GM10248 (cell line): ENCODE measurements at regions of chr5 and their contacts with region 1.

Region 1: DNA sequence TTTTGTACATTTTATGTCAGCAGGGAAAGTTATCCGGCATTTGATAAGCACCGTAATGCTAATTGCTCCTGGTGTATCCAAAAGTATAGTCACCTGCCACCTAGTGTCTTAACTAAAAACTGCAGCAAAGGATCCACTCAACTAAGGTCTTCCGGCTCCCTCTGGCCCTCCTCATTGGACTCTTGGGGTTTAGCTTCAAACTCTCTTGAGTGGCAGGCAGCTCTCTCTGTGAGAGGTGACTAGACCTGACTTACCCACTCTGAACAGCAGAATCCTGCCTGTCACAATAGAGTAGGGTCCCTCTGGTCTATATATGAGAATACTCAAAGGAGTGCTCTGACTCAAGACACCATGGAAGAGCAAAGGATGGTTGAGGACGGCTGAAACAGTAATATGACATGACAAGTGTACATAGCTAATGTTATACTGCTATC is 60.3 kb upstream of the CAST start:
- DNase-seq: peak; percentile 66
- CTCF ChIP-seq: peak; percentile 73

Region 2: GRCh38 chr5:95858661-95859326 is 743.0 kb before region 1 on chr5:
- CTCF ChIA-PET with region 1: interaction called, 14 read pairs
- POLR2A ChIA-PET with region 1: no interaction called
- DNase-seq: peak; percentile 89
- CTCF ChIP-seq: peak; percentile 98

Region 3: GRCh38 chr5:96350678-96351077 is 251.2 kb before region 1 on chr5:
- CTCF ChIA-PET with region 1: interaction called, 283 read pairs
- POLR2A ChIA-PET with region 1: no interaction called
- DNase-seq: no peak
- CTCF ChIP-seq: no peak

Region 4: DNA sequence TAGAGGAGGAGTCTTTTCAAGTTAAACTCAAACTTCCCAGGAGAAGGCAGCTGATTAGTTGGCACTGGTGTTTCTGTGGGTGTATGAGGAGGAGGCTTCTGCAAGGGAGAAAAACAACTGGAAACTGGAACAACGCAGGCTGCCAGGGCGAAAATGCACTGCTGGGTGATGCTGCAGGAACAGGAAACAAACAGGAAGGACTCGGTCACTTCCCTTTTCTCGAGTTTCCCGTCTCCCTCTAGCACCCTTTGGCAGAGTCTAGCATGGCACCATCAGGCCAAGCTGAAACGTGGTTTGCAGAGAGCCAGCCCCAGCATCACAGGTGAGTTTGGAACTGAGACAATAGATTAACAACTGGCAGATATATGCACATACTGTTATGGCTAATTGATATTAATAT is 17.1 kb before region 1 on chr5:
- CTCF ChIA-PET with region 1: interaction called, 18 read pairs
- POLR2A ChIA-PET with region 1: no interaction called
- DNase-seq: no peak
- CTCF ChIP-seq: no peak

Region 5: DNA sequence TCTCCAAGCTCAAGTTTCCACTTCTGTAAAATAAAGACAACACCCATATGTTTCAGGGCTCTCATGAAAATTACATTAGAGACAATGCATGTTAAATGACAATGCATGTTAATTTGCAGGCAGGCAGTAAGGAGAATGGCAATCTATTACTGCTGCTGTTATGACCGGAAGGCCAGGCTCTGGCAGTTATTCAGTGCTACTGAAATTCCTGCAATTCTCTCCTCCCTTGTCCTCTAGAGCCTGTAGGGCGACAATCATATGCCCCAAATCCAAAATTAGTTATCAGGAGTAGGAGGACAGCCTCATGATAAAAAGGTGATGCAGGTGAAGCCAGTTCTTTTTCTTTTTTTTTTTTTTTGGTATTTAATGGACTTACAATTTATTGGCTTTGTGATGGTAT is 18.1 kb after region 1 on chr5:
- CTCF ChIA-PET with region 1: interaction called, 64 read pairs
- POLR2A ChIA-PET with region 1: no interaction called
- DNase-seq: no peak
- CTCF ChIP-seq: no peak